ENCODE measurements at regions of chrX and their contacts with region 1.

Region 1: DNA sequence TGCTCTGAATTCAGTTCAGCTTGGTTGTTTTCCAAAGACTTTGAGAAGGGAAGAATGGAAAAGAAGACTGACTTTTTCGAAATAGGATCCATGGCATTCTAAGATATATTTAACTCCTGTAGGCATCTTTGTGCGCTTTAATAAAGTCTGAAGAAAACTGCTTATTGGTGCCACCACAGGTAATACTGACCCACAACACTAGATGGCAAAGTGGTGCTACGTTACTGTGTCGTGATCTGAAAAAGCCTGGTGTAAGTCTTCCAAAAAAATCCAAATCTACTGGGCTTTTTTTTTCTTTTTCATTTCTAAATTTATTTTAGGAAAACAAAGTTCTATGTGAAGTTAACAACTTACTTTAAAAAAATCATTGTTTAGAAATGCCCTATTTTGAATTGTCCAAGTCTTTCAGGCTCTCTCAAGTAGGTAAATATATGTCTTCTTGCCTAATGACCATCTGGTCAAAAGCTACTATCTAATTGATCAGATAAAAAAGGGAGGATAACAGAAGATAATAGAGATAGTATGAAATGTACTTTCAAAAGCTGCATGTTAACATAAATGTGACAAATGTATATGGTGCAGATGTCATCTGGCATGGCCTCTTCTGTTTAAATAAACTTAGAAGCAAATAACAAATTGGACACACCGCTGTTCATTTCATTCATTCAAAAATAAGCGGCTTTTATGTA is 47.0 kb upstream of the MID1IP1 start:
- DNase-seq: peak in 4 of 5 donors; percentile 18 to 39 (median 22)
- H3K4me3 ChIP-seq: no peak overlapping the region
- H3K4me3 Mint-ChIP-seq: no peak overlapping the region
- H3K27ac ChIP-seq: no peak overlapping the region
- H3K27ac Mint-ChIP-seq: no peak overlapping the region
- H3K4me1 ChIP-seq: no peaks in the 10 kb centered on the region
- H3K4me1 Mint-ChIP-seq: no peaks in the 10 kb centered on the region
- H3K27me3 ChIP-seq: no peaks in the 10 kb centered on the region
- H3K27me3 Mint-ChIP-seq: no peaks in the 10 kb centered on the region

Region 2: GRCh38 chrX:38664285-38664684 is 90.0 kb before region 1 on chrX:
- CTCF ChIA-PET with region 1: interaction called, 3 read pairs
- POLR2A ChIA-PET with region 1: no interaction called
- intact Hi-C with region 1: loop called (anchors 10 kb)
- DNase-seq: no peak
- H3K4me3 ChIP-seq: no peak overlapping the region
- H3K4me3 Mint-ChIP-seq: no peak overlapping the region
- H3K27ac ChIP-seq: no peak overlapping the region
- H3K27ac Mint-ChIP-seq: no peak overlapping the region
- H3K4me1 ChIP-seq: peaks cover 2% of the 10 kb centered on the region
- H3K4me1 Mint-ChIP-seq: peaks cover 0 to under 1% (median under 1%) of the 10 kb centered on the region in 4 donors
- H3K27me3 ChIP-seq: no peaks in the 10 kb centered on the region
- H3K27me3 Mint-ChIP-seq: no peaks in the 10 kb centered on the region

Region 3: GRCh38 chrX:38985375-38985774 is 231.1 kb after region 1 on chrX:
- CTCF ChIA-PET with region 1: interaction called, 4 read pairs
- POLR2A ChIA-PET with region 1: no interaction called
- intact Hi-C with region 1: loop called (anchors 1 kb)
- DNase-seq: peak in 4 of 5 donors; percentile 24 to 35 (median 28)
- H3K4me3 ChIP-seq: no peak overlapping the region
- H3K4me3 Mint-ChIP-seq: no peak overlapping the region
- H3K27ac ChIP-seq: no peak overlapping the region
- H3K27ac Mint-ChIP-seq: no peak overlapping the region
- H3K4me1 ChIP-seq: no peaks in the 10 kb centered on the region
- H3K4me1 Mint-ChIP-seq: peaks cover 0 to 2% (median 0%) of the 10 kb centered on the region in 4 donors
- H3K27me3 ChIP-seq: no peaks in the 10 kb centered on the region
- H3K27me3 Mint-ChIP-seq: no peaks in the 10 kb centered on the region

Region 4: DNA sequence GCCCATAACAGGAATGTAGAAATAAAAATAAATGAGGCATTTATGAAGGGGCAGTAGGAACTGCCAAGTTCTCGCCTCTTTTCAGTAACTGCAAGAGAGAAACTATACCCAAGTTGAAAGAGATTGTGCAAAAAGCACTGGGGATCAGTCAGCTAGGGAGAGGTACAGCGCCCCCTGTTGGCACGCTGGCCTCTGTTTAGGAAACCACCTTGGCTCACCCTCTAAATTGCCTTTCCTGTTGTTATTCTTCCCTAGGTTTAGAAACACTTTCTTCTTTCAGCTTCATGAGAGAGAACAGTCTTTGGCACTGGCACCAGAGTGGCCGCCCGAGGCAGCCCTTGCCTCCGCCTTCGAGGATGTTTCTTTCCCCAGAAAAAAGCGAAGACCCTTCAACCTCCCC is 395.5 kb after region 1 on chrX:
- CTCF ChIA-PET with region 1: interaction called, 4 read pairs
- POLR2A ChIA-PET with region 1: no interaction called
- intact Hi-C with region 1: loop called (anchors 1 kb)
- DNase-seq: peak in 4 of 5 donors; percentile 35 to 46 (median 40)
- H3K4me3 ChIP-seq: no peak overlapping the region
- H3K4me3 Mint-ChIP-seq: no peak overlapping the region
- H3K27ac ChIP-seq: no peak overlapping the region
- H3K27ac Mint-ChIP-seq: no peak overlapping the region
- H3K4me1 ChIP-seq: no peaks in the 10 kb centered on the region
- H3K4me1 Mint-ChIP-seq: no peaks in the 10 kb centered on the region
- H3K27me3 ChIP-seq: no peaks in the 10 kb centered on the region
- H3K27me3 Mint-ChIP-seq: no peaks in the 10 kb centered on the region

Region 5: GRCh38 chrX:39242187-39242586 is 487.9 kb after region 1 on chrX:
- CTCF ChIA-PET with region 1: interaction called, 3 read pairs
- POLR2A ChIA-PET with region 1: no interaction called
- intact Hi-C with region 1: loop called (anchors 1 kb)
- DNase-seq: peak in 4 of 5 donors; percentile 14 to 27 (median 20)
- H3K4me3 ChIP-seq: no peak overlapping the region
- H3K4me3 Mint-ChIP-seq: no peak overlapping the region
- H3K27ac ChIP-seq: no peak overlapping the region
- H3K27ac Mint-ChIP-seq: no peak overlapping the region
- H3K4me1 ChIP-seq: no peaks in the 10 kb centered on the region
- H3K4me1 Mint-ChIP-seq: no peaks in the 10 kb centered on the region
- H3K27me3 ChIP-seq: no peaks in the 10 kb centered on the region
- H3K27me3 Mint-ChIP-seq: no peaks in the 10 kb centered on the region

Region 6: GRCh38 chrX:40468033-40468846 is 1714.0 kb after region 1 on chrX:
- CTCF ChIA-PET with region 1: no interaction called
- POLR2A ChIA-PET with region 1: no interaction called
- intact Hi-C with region 1: loop called (anchors 2 kb)
- DNase-seq: peak in 4 of 5 donors; percentile 21 to 37 (median 23)
- H3K4me3 ChIP-seq: no peak overlapping the region
- H3K4me3 Mint-ChIP-seq: peak overlapping the region in 2 of 8 donors; percentile 15 to 45
- H3K27ac ChIP-seq: no peak overlapping the region
- H3K27ac Mint-ChIP-seq: peak overlapping the region in 2 of 7 donors; percentile 25 to 65
- H3K4me1 ChIP-seq: peaks cover 26% of the 10 kb centered on the region
- H3K4me1 Mint-ChIP-seq: peaks cover 16 to 34% (median 24%) of the 10 kb centered on the region in 4 donors
- H3K27me3 ChIP-seq: no peaks in the 10 kb centered on the region
- H3K27me3 Mint-ChIP-seq: peaks cover 0 to 2% of the 10 kb centered on the region in 2 donors

Measured in CD4-positive, alpha-beta memory T cell (primary cell).